ENCODE measurements at regions of chr6 and their contacts with region 1.

Region 1: GRCh38 chr6:31485055-31485454 is 12.9 kb upstream of the MICB start:
- DNase-seq: no peak
- H3K4me3 ChIP-seq: no peak overlapping the region
- H3K27ac ChIP-seq: no peak overlapping the region
- H3K4me1 ChIP-seq: 0 out of 2 replicates have a peak, but pooled peaks cover 8% of the 10 kb centered on the region
- H3K27me3 ChIP-seq: no peaks in the 10 kb centered on the region
- CTCF ChIP-seq: no peak

Region 2: GRCh38 chr6:31383149-31383548 is 101.9 kb before region 1 on chr6:
- CTCF ChIA-PET with region 1: no interaction called
- POLR2A ChIA-PET with region 1: no interaction called
- intact Hi-C with region 1: loop called (anchors 1 kb)
- DNase-seq: peak in 1 of 2 experiments; percentile 52
- H3K4me3 ChIP-seq: no peak overlapping the region
- H3K27ac ChIP-seq: no peak overlapping the region
- H3K4me1 ChIP-seq: no peaks in the 10 kb centered on the region
- H3K27me3 ChIP-seq: peaks cover 9% of the 10 kb centered on the region; the same call in 1 of the 2 replicates
- CTCF ChIP-seq: no peak

Region 3: GRCh38 chr6:31676322-31676903 is 191.4 kb after region 1 on chr6:
- CTCF ChIA-PET with region 1: no interaction called
- POLR2A ChIA-PET with region 1: no interaction called
- intact Hi-C with region 1: no loop called
- DNase-seq: no peak
- H3K4me3 ChIP-seq: no peak overlapping the region
- H3K27ac ChIP-seq: no peak overlapping the region
- H3K4me1 ChIP-seq: peaks cover 9% of the 10 kb centered on the region
- H3K27me3 ChIP-seq: no peaks in the 10 kb centered on the region
- CTCF ChIP-seq: no peak

Measured in PC-9 (cell line).